Aorta (tissue), 5 donors: ENCODE measurements at regions of chr22 and their contacts with region 1.

Region 1: DNA sequence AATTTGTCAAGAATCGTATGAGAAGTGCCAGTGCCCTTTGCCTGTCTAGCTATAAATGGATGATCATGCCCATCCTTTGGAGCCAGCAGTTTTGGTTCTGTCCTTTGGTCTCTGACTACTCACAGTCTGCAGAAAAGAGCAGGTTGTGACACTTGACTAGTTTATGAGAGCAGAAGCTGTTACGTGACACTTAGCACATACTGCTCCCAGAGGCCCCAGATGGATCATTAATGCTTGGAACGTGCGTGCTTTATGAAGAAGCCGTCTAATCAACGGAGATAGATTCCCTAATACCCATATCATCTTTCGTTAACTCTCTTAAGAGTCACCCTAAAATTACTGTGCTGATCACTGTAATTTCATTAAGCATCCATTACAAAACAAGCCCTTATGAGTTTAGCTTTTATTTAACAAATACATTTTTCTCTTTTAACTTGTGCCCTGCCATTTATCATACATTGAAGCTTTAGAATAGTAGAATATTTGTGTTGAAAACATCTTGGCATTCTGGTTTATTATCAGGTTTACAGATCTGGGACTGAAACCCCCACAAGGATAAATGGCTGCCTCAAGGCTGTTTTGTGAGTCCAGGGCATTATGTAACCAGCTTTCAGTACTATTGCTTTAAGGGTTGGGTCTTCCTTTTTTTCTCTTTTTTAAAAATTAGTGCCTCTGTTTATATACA is 47.0 kb upstream of the ADORA2A start:
- DNase-seq: no peak
- ATAC-seq: no peak
- H3K4me3 ChIP-seq: no peak overlapping the region
- H3K27ac ChIP-seq: no peak overlapping the region
- H3K4me1 ChIP-seq: no peaks in the 10 kb centered on the region
- H3K27me3 ChIP-seq: no peaks in the 10 kb centered on the region

Region 2: GRCh38 chr22:23888615-23889401 is 491.6 kb before region 1 on chr22:
- intact Hi-C with region 1: no loop called
- DNase-seq: no peak
- ATAC-seq: peak; percentile 21
- H3K4me3 ChIP-seq: no peak overlapping the region
- H3K27ac ChIP-seq: peak overlapping the region in 1 of 2 donors; percentile 33
- H3K4me1 ChIP-seq: no peaks in the 10 kb centered on the region
- H3K27me3 ChIP-seq: no peaks in the 10 kb centered on the region

Region 3: DNA sequence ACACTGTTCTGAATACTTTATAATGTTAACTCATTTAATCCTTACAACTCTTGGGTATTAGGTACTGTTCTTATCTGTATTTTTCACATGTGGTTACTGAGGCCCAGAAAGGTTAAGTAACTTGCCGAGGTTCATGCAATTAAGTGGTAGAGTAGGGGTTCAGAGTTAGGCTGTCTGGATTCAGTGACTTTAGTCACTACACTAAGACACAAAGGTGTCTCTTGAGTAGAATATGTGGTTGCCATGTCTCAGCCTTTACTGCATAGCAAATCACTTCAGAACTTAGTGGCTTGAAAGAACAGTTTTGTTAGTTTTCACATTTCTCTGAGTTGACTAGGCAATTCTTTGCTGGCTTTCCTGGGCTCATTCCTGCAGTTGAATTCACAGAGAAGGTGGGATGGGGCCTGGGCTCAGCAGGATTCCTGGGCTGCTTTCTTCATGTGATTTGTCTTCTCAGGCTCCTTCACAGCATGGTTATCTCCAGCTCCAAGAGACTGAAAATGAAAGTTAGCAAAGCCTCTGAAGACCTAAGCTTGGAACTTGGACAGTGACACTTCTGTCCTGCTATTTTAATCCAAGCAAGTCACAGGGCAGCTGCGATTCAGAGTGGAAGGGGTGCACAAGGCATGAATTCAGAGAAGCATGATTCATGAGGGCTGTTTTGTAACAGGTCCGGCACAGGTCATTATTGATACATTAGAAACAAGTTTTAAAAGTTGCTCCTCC is 41.5 kb before region 1 on chr22:
- intact Hi-C with region 1: loop called in 1 of 2 experiments (anchors 10 kb)
- DNase-seq: no peak
- ATAC-seq: no peak
- H3K4me3 ChIP-seq: no peak overlapping the region
- H3K27ac ChIP-seq: no peak overlapping the region
- H3K4me1 ChIP-seq: no peaks in the 10 kb centered on the region
- H3K27me3 ChIP-seq: no peaks in the 10 kb centered on the region